Sigmoid colon (tissue), 7 donors: ENCODE measurements at regions of chr20 and their contacts with region 1.

Region 1: GRCh38 chr20:41052732-41053388 is 24.2 kb downstream of the TOP1 start:
- DNase-seq: no peak
- H3K4me3 ChIP-seq: no peak overlapping the region
- H3K27ac ChIP-seq: peak overlapping the region in 3 of 4 donors; percentile 25 to 73 (median 72)
- H3K4me1 ChIP-seq: peaks cover 0 to 100% (median 93%) of the 10 kb centered on the region in 4 donors
- H3K27me3 ChIP-seq: no peaks in the 10 kb centered on the region
- CTCF ChIP-seq: no peak
- EP300 ChIP-seq: no peak
- POLR2A ChIP-seq: no peak

Region 2: GRCh38 chr20:41028348-41029148 is 24.3 kb before region 1 on chr20 and contains the start of gene TOP1:
- intact Hi-C with region 1: loop called (anchors 2 kb)
- DNase-seq: peak; percentile 100
- H3K4me3 ChIP-seq: peak within 1 kb of the TSS; percentile 98 to 100 (median 100)
- H3K27ac ChIP-seq: peak within 1 kb of the TSS; percentile 98 to 100 (median 100)
- H3K4me1 ChIP-seq: peaks cover 0 to 43% (median 40%) of the 10 kb centered on the region in 4 donors
- H3K27me3 ChIP-seq: no peaks in the 10 kb centered on the region
- CTCF ChIP-seq: no peak
- EP300 ChIP-seq: peak in 1 of 4 donors; percentile 27
- POLR2A ChIP-seq: peak; percentile 97 to 98
- total RNA-seq, gene TOP1: 22.0 to 33.2 (median 22.4) TPM